ENCODE measurements at regions of chr14 and their contacts with region 1.

Region 1: GRCh38 chr14:98912655-98913054 is 359.3 kb downstream of the BCL11B start:
- DNase-seq: peak; percentile 20
- H3K4me3 ChIP-seq: no peak overlapping the region
- H3K27ac ChIP-seq: no peak overlapping the region
- H3K4me1 ChIP-seq: peaks cover 47% of the 10 kb centered on the region
- H3K27me3 ChIP-seq: no peaks in the 10 kb centered on the region
- CTCF ChIP-seq: no peak

Region 2: GRCh38 chr14:98953551-98954348 is 41.1 kb after region 1 on chr14:
- CTCF ChIA-PET with region 1: no interaction called
- dilution Hi-C with region 1: no loop called
- in situ Hi-C with region 1: no loop called
- intact Hi-C with region 1: loop called (anchors 1 kb)
- DNase-seq: peak; percentile 91
- H3K4me3 ChIP-seq: no peak overlapping the region
- H3K27ac ChIP-seq: no peak overlapping the region
- H3K4me1 ChIP-seq: peaks cover 39% of the 10 kb centered on the region
- H3K27me3 ChIP-seq: no peaks in the 10 kb centered on the region
- CTCF ChIP-seq: no peak